A673 (cell line): ENCODE measurements at regions of chr1 and their contacts with region 1.

Region 1: GRCh38 chr1:16055613-16056520 is 12.3 kb downstream of the CLCNKB start:
- DNase-seq: peak; percentile 92
- H3K4me3 ChIP-seq: no peak overlapping the region
- H3K27ac ChIP-seq: no peak overlapping the region
- H3K4me1 ChIP-seq: no peaks in the 10 kb centered on the region
- H3K27me3 ChIP-seq: no peaks in the 10 kb centered on the region
- CTCF ChIP-seq: peak; percentile 96

Region 2: DNA sequence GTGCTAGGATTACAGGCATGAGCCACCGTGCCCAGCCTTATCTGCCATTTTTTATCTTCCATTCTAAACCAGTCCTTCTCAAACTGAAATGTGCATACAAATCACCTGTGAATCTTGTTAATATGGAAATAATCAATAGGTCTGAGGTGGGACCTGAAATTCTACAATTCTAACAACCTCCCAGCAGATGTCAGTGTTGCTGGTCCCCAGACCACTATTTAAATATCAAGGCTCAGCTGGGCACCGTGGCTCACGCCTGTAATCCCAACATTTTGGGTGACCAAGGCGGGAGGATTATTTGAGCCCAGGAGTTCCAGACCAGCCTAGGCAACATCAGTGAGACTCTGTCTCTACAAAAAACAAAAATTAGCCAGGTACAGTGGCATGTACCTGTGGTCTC is 252.5 kb before region 1 on chr1:
- CTCF ChIA-PET with region 1: no interaction called
- POLR2A ChIA-PET with region 1: no interaction called
- intact Hi-C with region 1: loop called (anchors 5 kb)
- DNase-seq: peak; percentile 57
- H3K4me3 ChIP-seq: no peak overlapping the region
- H3K27ac ChIP-seq: no peak overlapping the region
- H3K4me1 ChIP-seq: peaks cover 7% of the 10 kb centered on the region
- H3K27me3 ChIP-seq: no peaks in the 10 kb centered on the region
- CTCF ChIP-seq: peak; percentile 61

Region 3: DNA sequence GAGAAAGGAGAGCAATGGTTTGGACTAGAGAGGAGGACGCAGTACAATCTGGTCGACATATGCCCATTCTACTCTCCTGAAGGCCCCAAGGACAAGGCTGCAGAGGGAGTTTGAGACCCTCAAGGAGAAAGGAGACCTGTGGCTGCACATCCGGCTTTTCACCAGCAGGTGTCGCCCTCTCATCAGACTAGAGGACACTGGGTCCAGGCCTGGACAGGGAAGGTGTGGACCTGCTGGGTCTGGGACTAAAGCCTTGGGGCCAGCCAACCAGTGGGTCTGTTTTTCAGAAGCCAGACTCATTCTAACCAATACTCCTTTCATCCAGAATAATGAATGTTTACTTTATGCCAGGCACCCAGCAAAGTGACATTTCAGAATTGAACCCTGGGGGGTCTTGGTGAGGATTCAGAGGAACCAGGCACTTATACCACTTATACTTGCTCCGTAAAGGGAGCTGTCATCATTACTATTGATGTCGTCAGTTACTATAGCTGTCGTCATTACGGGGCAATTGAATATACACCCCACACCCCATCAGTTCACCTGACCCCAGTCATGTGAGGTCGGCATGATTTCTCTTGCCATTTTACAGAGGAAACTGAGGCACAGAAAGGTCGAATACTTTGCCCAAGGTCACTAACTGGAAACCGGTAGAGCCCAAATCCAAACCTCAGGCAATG is 46.7 kb before region 1 on chr1:
- CTCF ChIA-PET with region 1: no interaction called
- POLR2A ChIA-PET with region 1: no interaction called
- intact Hi-C with region 1: loop called (anchors 1 kb)
- DNase-seq: peak; percentile 84
- H3K4me3 ChIP-seq: no peak overlapping the region
- H3K27ac ChIP-seq: no peak overlapping the region
- H3K4me1 ChIP-seq: peaks cover 10% of the 10 kb centered on the region
- H3K27me3 ChIP-seq: no peaks in the 10 kb centered on the region
- CTCF ChIP-seq: peak; percentile 98

Region 4: DNA sequence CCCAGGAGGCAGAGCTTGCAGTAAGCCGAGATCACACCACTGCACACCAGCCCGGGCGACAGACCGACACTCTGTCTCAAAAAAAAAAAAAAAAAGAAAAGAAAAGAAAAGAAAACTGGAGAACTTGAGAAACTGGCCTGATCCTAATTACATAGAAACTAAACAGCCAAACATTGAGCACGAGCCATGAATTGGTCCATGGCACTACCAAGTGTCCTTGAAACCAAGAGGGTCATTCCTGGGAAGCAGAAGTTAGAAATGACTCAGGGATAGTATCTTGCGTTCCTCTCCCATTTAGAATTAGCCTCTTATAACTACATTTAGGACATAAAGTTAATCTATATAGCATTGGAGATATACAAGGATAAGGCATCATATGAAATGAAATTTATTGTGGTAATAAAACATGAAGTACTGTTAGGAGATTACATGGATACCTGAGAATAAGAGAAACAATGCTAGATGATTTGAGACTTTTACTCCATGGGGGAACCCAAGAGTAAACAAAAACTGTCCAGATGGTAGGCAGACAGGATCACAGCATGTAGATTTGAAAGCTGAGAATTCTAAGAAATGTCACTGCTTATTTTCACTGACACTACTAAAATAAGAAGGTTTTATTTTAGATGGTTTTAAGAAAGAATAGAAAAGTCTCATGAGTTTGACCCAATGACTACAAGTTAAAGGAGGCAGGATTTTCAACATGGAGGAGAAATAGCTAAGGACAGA is 220.6 kb after region 1 on chr1:
- CTCF ChIA-PET with region 1: no interaction called
- POLR2A ChIA-PET with region 1: no interaction called
- intact Hi-C with region 1: no loop called
- DNase-seq: no peak
- H3K4me3 ChIP-seq: no peak overlapping the region
- H3K27ac ChIP-seq: no peak overlapping the region
- H3K4me1 ChIP-seq: no peaks in the 10 kb centered on the region
- H3K27me3 ChIP-seq: no peaks in the 10 kb centered on the region
- CTCF ChIP-seq: no peak